Endothelial cell of umbilical vein (primary cell): ENCODE measurements at regions of chr1 and their contacts with region 1.

Region 1: DNA sequence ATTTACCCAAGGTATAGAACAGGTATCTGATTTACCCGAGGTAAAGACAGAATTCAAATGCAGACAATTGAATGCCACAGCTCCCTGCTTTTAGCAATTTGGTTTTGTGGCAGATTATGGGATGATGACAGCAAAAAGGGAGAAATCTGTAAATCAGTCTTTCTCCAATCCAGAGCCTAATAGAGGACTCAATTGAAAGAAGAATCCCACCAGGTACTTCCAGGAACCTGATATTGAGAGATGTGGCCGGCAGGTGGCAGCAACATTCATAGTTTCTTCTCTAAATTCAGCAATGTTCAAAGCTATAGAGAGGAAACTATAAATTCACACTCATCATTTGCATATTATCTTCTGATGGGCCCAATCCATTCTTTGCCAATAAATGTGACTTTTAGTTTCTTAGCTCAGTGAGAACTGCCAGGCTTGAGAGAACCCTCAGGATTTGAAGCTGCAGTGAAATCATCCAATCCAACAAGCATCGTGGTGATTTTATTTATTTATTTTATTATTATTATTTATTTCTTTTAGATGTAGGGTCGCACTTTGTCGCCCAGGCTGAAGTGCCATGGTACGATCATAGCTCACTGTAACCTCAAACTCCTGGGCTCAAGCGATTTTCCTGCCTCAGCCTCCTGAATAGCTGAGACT is 9.8 kb upstream of the PHACTR4 start:
- DNase-seq: peak; percentile 73
- H3K4me3 ChIP-seq: no peak overlapping the region
- H3K27ac ChIP-seq: no peak overlapping the region
- H3K4me1 ChIP-seq: no peaks in the 10 kb centered on the region
- H3K27me3 ChIP-seq: no peaks in the 10 kb centered on the region
- CTCF ChIP-seq: peak; percentile 56 to 64
- POLR2A ChIP-seq: no peak

Region 2: GRCh38 chr1:28329395-28330153 is 30.1 kb before region 1 on chr1:
- CTCF ChIA-PET with region 1: interaction called, 13 read pairs
- POLR2A ChIA-PET with region 1: interaction called, 10 read pairs
- dilution Hi-C with region 1: no loop called
- intact Hi-C with region 1: no loop called
- DNase-seq: peak; percentile 25
- H3K4me3 ChIP-seq: peak overlapping the region; percentile 62 to 93 (median 78)
- H3K27ac ChIP-seq: peak overlapping the region; percentile 91
- H3K4me1 ChIP-seq: peaks cover 11% of the 10 kb centered on the region
- H3K27me3 ChIP-seq: no peaks in the 10 kb centered on the region
- CTCF ChIP-seq: no peak
- POLR2A ChIP-seq: no peak

Region 3: DNA sequence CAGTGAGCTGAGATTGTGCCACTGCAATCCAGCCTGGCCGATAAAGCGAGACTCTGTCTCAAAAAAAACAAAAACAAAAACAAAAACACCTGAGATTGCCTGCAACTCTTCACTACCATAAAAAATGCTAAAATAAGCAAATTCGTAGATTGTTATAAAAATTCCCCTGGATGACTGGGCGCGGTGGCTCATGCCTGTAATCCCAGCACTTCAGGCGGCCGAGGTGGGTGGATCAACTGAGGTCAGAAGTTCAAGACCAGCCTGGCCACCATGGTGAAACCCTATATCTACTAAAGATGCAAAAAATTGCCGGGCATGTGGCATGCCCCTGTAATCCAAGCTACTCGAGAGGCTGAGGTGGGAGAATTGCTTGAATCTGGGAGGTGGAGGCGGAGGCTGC is 20.2 kb before region 1 on chr1:
- CTCF ChIA-PET with region 1: interaction called, 12 read pairs
- POLR2A ChIA-PET with region 1: no interaction called
- dilution Hi-C with region 1: no loop called
- intact Hi-C with region 1: no loop called
- DNase-seq: no peak
- H3K4me3 ChIP-seq: no peak overlapping the region
- H3K27ac ChIP-seq: no peak overlapping the region
- H3K4me1 ChIP-seq: no peaks in the 10 kb centered on the region
- H3K27me3 ChIP-seq: no peaks in the 10 kb centered on the region
- CTCF ChIP-seq: no peak
- POLR2A ChIP-seq: no peak

Region 4: GRCh38 chr1:28412731-28413130 is 53.0 kb after region 1 on chr1:
- CTCF ChIA-PET with region 1: interaction called, 18 read pairs
- POLR2A ChIA-PET with region 1: no interaction called
- dilution Hi-C with region 1: no loop called
- intact Hi-C with region 1: no loop called
- DNase-seq: no peak
- H3K4me3 ChIP-seq: no peak overlapping the region
- H3K27ac ChIP-seq: no peak overlapping the region
- H3K4me1 ChIP-seq: peaks cover 18% of the 10 kb centered on the region
- H3K27me3 ChIP-seq: no peaks in the 10 kb centered on the region
- CTCF ChIP-seq: no peak
- POLR2A ChIP-seq: no peak

Region 5: DNA sequence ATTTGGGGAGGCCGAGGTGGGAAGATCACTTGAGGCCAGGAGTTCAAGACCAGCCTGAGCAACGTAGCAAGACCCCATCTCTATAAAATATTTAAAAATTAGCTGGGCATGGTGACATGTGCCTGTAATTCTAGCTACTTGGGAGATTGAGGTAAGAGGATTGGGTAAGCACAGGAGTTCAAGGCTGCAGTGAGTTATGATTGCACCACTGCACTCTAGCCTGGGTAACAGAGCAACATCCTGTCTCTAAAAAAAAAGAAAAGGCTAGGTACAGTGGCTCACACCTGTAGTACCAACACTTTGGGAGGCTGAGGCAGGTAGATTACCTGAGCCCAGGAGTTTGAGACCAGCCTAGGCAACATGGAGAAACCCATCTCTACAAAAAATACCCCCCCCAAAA is 110.4 kb after region 1 on chr1:
- CTCF ChIA-PET with region 1: interaction called, 24 read pairs
- POLR2A ChIA-PET with region 1: no interaction called
- dilution Hi-C with region 1: no loop called
- intact Hi-C with region 1: no loop called
- DNase-seq: no peak
- H3K4me3 ChIP-seq: no peak overlapping the region
- H3K27ac ChIP-seq: no peak overlapping the region
- H3K4me1 ChIP-seq: no peaks in the 10 kb centered on the region
- H3K27me3 ChIP-seq: no peaks in the 10 kb centered on the region
- CTCF ChIP-seq: no peak
- POLR2A ChIP-seq: no peak

Region 6: DNA sequence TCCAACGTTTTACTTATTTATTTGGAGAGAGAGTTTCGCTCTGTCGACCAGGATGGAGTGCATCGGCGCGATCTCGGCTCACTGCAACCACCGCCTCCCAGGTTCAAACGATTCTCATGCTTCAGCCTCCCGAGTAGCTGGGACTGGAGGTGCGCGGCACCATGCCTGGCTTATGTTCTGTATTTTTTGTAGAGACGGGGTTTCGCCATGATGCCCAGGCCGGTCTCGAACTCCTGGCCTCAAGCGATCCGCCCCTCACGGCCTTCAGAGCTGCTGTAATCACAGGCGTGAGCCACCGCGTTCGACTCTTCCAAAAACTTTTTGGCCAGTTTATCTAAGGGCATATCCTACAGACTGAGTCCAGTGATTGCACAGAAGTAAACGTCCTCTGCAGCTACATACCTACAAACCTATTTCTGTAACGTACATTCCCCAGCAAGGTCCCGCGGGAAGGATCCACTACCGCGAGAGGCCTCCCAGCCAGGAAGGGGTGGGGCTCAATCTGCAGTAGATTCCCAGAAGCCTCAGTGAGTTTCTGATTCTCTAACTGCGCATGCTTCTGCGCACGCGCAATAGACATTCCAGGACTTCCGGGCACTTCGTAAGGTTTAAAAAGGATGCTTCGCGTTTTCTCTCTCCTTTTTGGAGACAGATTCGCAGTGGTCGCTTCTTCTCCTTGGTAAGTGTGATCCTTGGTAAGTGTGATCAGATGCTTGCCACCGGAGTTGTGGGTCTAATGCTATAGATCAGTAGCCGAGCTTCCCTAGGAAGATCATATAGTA is 145.9 kb after region 1 on chr1 and contains the start of gene RCC1:
- CTCF ChIA-PET with region 1: interaction called, 13 read pairs
- POLR2A ChIA-PET with region 1: no interaction called
- dilution Hi-C with region 1: no loop called
- intact Hi-C with region 1: no loop called
- DNase-seq: peak; percentile 100
- H3K4me3 ChIP-seq: peak within 1 kb of the TSS; percentile 58 to 100 (median 87)
- H3K27ac ChIP-seq: peak within 1 kb of the TSS; percentile 78
- H3K4me1 ChIP-seq: peaks cover 29% of the 10 kb centered on the region
- H3K27me3 ChIP-seq: no peaks in the 10 kb centered on the region
- CTCF ChIP-seq: no peak
- POLR2A ChIP-seq: peak; percentile 100
- total RNA-seq, gene RCC1: 72.7 and 77.7 TPM in 2 replicates

Region 7: GRCh38 chr1:28552758-28553663 is 193.3 kb after region 1 on chr1 and contains the start of gene TRNAU1AP:
- CTCF ChIA-PET with region 1: interaction called, 11 read pairs
- POLR2A ChIA-PET with region 1: interaction called, 7 read pairs
- dilution Hi-C with region 1: no loop called
- intact Hi-C with region 1: no loop called
- DNase-seq: peak; percentile 98
- H3K4me3 ChIP-seq: peak within 1 kb of the TSS; percentile 79 to 86 (median 85)
- H3K27ac ChIP-seq: peak within 1 kb of the TSS; percentile 39
- H3K4me1 ChIP-seq: peaks cover 12% of the 10 kb centered on the region
- H3K27me3 ChIP-seq: no peaks in the 10 kb centered on the region
- CTCF ChIP-seq: no peak
- POLR2A ChIP-seq: peak; percentile 86
- total RNA-seq, gene TRNAU1AP: 46.2 and 49.0 TPM in 2 replicates